CD8-positive, alpha-beta T cell (primary cell): ENCODE measurements at regions of chr10 and their contacts with region 1.

Region 1: GRCh38 chr10:33234831-33235237 is 99.6 kb downstream of the NRP1 start:
- DNase-seq: no peak
- ATAC-seq: no peak
- H3K4me3 ChIP-seq: no peak overlapping the region
- H3K4me3 Mint-ChIP-seq: no peak overlapping the region
- H3K27ac ChIP-seq: no peak overlapping the region
- H3K27ac Mint-ChIP-seq: no peak overlapping the region
- H3K4me1 ChIP-seq: no peaks in the 10 kb centered on the region
- H3K4me1 Mint-ChIP-seq: no peaks in the 10 kb centered on the region
- H3K27me3 ChIP-seq: no peaks in the 10 kb centered on the region
- H3K27me3 Mint-ChIP-seq: no peaks in the 10 kb centered on the region
- CTCF ChIP-seq: no peak

Region 2: DNA sequence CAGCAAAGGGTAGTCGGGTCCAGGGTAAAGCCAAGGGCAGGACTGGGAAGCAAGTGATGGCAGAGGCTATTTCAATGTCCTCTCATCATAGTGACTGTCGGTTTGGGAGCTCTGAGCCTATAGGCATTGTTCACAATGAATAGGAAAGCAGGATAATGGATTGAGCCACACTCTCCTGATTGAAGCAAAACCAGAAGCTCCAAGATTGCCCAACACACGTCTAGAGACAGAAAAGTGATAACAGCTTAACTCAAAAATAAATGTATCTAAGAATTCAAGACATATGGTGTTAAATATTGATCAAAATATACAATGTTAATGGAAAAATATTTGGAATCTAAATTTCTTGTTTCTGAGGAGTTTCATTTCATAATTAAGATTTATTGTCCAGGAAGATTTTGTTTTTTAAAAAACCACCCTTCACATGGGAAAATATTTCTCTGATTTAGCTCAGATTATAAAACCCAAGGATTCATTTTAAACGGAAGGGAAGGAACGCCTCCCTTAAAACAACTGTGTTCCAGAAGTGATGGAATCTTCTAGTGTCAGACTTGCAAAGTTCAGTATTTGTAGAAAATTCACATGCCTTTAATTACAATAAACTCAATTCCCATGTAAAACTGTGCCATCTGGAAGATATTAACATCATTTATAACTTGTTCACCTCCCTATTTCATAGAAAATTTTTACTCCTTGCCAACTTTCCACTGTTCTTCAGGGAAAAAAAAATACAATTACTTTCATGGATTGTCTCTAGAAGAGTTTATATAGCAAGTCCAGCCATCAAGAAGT is 45.2 kb after region 1 on chr10:
- CTCF ChIA-PET with region 1: no interaction called
- POLR2A ChIA-PET with region 1: no interaction called
- intact Hi-C with region 1: loop called in 1 of 2 experiments (anchors 5 kb)
- DNase-seq: no peak
- ATAC-seq: no peak
- H3K4me3 ChIP-seq: no peak overlapping the region
- H3K4me3 Mint-ChIP-seq: no peak overlapping the region
- H3K27ac ChIP-seq: no peak overlapping the region
- H3K27ac Mint-ChIP-seq: no peak overlapping the region
- H3K4me1 ChIP-seq: no peaks in the 10 kb centered on the region
- H3K4me1 Mint-ChIP-seq: no peaks in the 10 kb centered on the region
- H3K27me3 ChIP-seq: no peaks in the 10 kb centered on the region
- H3K27me3 Mint-ChIP-seq: peaks cover 6% of the 10 kb centered on the region
- CTCF ChIP-seq: no peak

Region 3: DNA sequence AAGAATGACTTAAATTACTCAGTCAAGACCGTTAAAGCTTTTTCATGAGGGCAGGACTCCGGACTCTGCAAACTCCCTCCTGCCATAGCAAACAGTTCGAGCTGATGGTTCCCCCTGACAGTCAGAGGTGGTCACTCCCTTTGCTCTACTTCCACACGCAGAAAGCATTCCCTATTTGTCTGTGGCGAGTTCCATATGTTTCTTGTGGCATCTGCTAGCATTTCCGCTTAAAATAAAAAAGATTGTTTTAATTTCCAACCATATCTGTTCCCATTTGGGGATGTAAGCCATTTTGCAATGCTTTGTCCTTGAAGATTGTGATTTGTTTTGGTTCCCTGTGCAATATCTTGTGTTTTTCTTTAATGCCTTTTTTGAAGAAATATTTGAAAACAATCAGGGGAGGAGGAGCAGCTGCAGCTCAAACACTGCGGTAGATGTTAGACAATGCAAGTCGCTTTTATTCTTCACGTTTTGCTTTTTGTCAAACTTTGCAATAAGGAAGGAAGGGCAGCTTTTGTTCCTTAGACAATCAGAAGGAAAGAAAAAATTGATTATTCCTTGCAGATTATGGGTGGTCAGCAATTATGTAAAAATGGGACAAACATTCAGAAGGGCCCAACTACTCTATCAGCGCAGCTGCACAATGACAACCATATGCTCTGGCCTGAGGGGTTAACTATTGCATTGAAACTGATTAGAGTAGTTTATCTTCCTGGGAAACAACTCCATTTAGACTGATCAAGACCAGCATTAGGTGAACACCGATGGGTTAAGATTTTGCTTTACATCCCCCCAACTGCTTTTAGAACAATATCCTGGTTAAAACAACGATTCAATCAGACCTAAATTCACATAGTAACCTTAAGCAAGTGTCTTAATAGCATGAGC is 525.5 kb after region 1 on chr10:
- CTCF ChIA-PET with region 1: no interaction called
- POLR2A ChIA-PET with region 1: no interaction called
- intact Hi-C with region 1: no loop called
- DNase-seq: no peak
- ATAC-seq: no peak
- H3K4me3 ChIP-seq: no peak overlapping the region
- H3K4me3 Mint-ChIP-seq: no peak overlapping the region
- H3K27ac ChIP-seq: no peak overlapping the region
- H3K27ac Mint-ChIP-seq: no peak overlapping the region
- H3K4me1 ChIP-seq: no peaks in the 10 kb centered on the region
- H3K4me1 Mint-ChIP-seq: no peaks in the 10 kb centered on the region
- H3K27me3 ChIP-seq: no peaks in the 10 kb centered on the region
- H3K27me3 Mint-ChIP-seq: no peaks in the 10 kb centered on the region
- CTCF ChIP-seq: no peak